PC-9 (cell line): ENCODE measurements at regions of chr16 and their contacts with region 1.

Region 1: DNA sequence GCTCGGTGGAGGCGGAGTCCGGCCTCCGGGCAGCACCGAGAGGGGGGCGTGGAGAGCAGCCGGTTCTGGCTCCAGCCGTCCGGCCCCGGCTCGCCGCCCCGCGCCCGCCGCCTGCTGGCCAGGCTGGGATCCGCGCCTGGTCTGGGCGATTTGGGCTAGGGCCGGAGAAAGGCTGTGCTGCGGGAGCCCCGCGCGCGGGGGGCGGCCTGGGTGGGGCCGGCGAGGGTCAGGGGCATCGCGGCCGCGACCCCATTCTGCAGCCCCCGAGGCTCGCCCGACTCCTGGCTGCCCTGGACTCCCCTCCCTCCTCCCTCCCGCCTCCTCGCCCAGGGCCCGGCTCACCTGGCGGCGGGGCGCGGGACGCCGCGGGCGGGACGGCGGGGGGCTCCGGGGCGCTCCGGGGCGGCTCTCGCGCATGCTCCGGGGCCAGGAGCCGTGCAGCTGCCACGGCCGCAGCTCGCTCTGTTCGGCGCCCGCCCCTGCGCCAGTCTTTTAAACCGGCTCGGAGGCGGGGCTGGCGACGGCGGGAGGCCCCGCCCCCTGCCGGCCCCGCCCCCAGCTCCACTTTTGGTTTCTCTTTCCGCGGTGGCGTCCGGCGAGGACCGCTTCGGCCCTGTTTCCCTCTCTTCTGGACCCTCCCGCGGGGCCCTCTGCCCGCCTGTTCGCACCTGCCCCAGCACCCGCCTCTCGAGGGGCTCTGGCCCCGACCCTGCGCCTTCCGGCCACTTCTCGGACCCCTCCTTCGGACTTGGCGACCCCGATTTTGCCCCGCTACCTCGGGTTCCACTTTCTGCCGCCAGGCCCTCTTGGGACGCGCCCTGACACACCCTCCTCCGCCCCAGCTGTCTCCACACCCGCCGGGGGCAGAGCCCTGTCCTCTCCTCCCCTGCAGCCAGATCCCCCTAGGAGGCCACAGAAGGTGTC is at the start of gene SOCS1:
- DNase-seq: peak; percentile 63 to 93
- H3K4me3 ChIP-seq: peak within 1 kb of the TSS; percentile 96
- H3K27ac ChIP-seq: peak within 1 kb of the TSS; percentile 69
- H3K4me1 ChIP-seq: peaks cover 23% of the 10 kb centered on the region
- H3K27me3 ChIP-seq: no peaks in the 10 kb centered on the region
- CTCF ChIP-seq: peak; percentile 81
- total RNA-seq, gene SOCS1: 4.6 and 6.7 TPM in 2 replicates

Region 2: DNA sequence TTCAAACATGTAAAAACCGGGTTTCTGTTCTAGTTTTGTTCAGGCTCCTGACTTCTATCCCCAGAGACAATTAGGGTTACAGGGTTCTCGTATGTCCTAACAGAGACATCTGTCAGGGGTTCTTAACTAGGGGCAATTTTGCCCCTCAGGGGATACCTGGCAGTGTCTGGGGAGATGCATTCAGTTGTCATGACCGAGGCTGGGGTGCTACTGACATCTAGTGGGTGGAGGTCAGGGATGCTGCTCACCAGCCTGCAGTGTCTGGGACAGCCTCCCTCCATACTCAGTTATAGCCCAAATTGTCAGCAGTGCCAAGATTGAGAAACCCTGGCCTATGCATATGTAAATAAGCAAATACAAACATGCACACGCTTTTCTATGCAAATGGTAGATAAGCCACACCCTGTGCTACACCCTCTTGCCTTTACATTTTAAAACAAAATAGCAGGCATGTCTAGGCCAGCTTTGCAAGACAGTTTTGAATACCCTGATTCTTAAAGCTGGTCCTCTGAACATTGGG is 274.2 kb before region 1 on chr16:
- CTCF ChIA-PET with region 1: interaction called, 25 read pairs
- POLR2A ChIA-PET with region 1: interaction called, 4 read pairs
- intact Hi-C with region 1: loop called (anchors 1 kb)
- DNase-seq: peak in 1 of 2 experiments; percentile 16
- H3K4me3 ChIP-seq: no peak overlapping the region
- H3K27ac ChIP-seq: no peak overlapping the region
- H3K4me1 ChIP-seq: peaks cover 22% of the 10 kb centered on the region
- H3K27me3 ChIP-seq: no peaks in the 10 kb centered on the region
- CTCF ChIP-seq: peak; percentile 50

Region 3: DNA sequence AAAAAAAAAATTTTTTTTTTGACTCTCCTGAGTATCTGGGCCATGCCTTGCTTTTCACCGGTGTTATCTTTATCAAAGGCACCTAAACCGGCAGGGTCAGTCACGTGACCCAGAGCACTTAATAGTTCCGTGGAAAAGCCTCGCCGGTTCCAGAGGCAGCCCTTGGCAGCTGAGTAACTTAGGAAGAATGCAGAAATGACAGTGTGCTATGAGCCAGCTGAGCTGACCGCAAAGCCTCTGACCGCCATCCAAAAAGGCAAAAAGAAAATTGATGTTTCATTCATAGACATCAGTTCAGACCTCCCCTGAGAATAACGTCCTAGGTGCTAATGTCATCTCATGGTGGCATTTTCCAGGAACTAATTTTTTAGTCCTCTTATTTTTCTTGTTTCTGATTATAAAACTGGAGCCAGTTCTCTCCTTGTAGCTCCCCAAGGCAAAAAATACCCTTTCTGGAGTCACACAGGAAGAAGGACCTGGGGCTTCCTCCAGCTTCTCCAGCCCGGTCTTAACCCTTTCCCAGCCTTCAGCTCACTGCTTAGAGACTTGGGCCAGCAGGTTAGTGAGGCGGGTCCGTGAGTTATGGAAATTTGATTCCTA is 122.6 kb before region 1 on chr16:
- CTCF ChIA-PET with region 1: interaction called, 14 read pairs
- POLR2A ChIA-PET with region 1: interaction called, 13 read pairs
- intact Hi-C with region 1: loop called (anchors 1 kb)
- DNase-seq: peak; percentile 90 to 96
- H3K4me3 ChIP-seq: peak overlapping the region; percentile 9; the same call in 1 of the 2 replicates
- H3K27ac ChIP-seq: peak overlapping the region; percentile 59
- H3K4me1 ChIP-seq: peaks cover 50% of the 10 kb centered on the region
- H3K27me3 ChIP-seq: no peaks in the 10 kb centered on the region
- CTCF ChIP-seq: no peak

Region 4: GRCh38 chr16:11268921-11269375 is 12.9 kb after region 1 on chr16 and contains the start of gene TNP2:
- CTCF ChIA-PET with region 1: no interaction called
- POLR2A ChIA-PET with region 1: interaction called, 10 read pairs
- intact Hi-C with region 1: no loop called
- DNase-seq: no peak
- H3K4me3 ChIP-seq: no peak within 1 kb of the TSS
- H3K27ac ChIP-seq: no peak within 1 kb of the TSS
- H3K4me1 ChIP-seq: no peaks in the 10 kb centered on the region
- H3K27me3 ChIP-seq: peaks cover 10% of the 10 kb centered on the region; the same call in 1 of the 2 replicates
- CTCF ChIP-seq: no peak
- total RNA-seq, gene TNP2: not detected in 2 replicates

Region 5: GRCh38 chr16:11328172-11329070 is 72.4 kb after region 1 on chr16:
- CTCF ChIA-PET with region 1: no interaction called
- POLR2A ChIA-PET with region 1: interaction called, 3 read pairs
- intact Hi-C with region 1: loop called (anchors 5 kb)
- DNase-seq: peak; percentile 78 to 89
- H3K4me3 ChIP-seq: peak overlapping the region; percentile 21; the same call in 1 of the 2 replicates
- H3K27ac ChIP-seq: no peak overlapping the region
- H3K4me1 ChIP-seq: peaks cover 15% of the 10 kb centered on the region
- H3K27me3 ChIP-seq: no peaks in the 10 kb centered on the region
- CTCF ChIP-seq: no peak

Region 6: GRCh38 chr16:11597239-11598101 is 341.5 kb after region 1 on chr16:
- CTCF ChIA-PET with region 1: no interaction called
- POLR2A ChIA-PET with region 1: interaction called, 11 read pairs
- intact Hi-C with region 1: no loop called
- DNase-seq: peak; percentile 74 to 77
- H3K4me3 ChIP-seq: no peak overlapping the region
- H3K27ac ChIP-seq: peak overlapping the region; percentile 84
- H3K4me1 ChIP-seq: peaks cover 41% of the 10 kb centered on the region
- H3K27me3 ChIP-seq: no peaks in the 10 kb centered on the region
- CTCF ChIP-seq: no peak